ENCODE measurements at regions of chr3 and their contacts with region 1.

Region 1: DNA sequence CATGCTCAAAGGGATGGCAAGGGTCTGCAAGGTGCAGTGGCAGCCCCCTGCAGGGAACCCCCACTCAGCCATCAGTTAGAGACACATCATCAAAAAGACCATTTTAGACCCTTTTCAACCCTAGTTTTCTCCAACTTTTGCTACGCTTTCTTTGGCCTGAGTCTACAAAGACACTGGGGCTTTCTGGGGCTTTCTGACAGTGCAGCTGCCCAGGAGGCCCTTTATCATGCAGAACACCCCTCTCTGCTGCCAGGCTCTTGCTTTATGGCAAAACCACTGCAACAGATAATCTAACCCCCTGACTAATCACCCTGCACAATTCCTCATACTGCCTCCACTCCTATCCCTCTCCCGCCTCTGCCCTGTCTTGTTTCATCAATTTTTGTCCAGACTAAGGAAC is 2.4 kb downstream of the NMNAT3 start:
- DNase-seq: peak; percentile 50
- H3K4me3 ChIP-seq: no peak overlapping the region
- H3K27ac ChIP-seq: peak overlapping the region in 1 of 2 experiments; percentile 99; a peak in 2 of 4 replicates
- H3K4me1 ChIP-seq: peaks cover 0 to 47% of the 10 kb centered on the region in 2 experiments; a peak in 2 of 4 replicates
- H3K27me3 ChIP-seq: no peaks in the 10 kb centered on the region
- CTCF ChIP-seq: no peak
- EP300 ChIP-seq: no peak
- RAD21 ChIP-seq: no peak

Region 2: DNA sequence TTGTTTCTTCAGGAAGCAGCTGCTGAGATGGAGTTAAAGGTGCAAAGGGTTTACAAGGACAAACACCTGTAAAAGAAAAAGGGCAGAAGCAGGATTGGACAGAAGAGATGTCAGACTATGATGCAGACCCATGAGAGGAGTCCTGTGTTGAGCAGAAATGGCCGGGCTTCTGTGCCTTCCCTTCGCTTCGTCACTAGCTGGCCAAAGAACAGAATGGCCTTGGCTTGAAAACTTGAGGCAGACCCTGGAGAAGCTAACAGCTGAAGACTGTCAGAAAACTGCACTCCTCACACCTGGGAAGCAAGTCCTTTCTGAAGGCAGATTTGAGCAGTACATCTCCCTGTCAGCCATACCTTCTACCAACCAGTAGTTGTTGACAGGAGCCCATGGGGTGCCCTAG is 10.9 kb after region 1 on chr3:
- CTCF ChIA-PET with region 1: interaction called, 24 read pairs
- POLR2A ChIA-PET with region 1: interaction called, 3 read pairs
- DNase-seq: no peak
- H3K4me3 ChIP-seq: no peak overlapping the region
- H3K27ac ChIP-seq: no peak overlapping the region
- H3K4me1 ChIP-seq: peaks cover 0 to 15% of the 10 kb centered on the region in 2 experiments; a peak in 2 of 4 replicates
- H3K27me3 ChIP-seq: no peaks in the 10 kb centered on the region
- CTCF ChIP-seq: no peak
- EP300 ChIP-seq: no peak
- RAD21 ChIP-seq: no peak